Mammary epithelial cell (primary cell): ENCODE measurements at regions of chr4 and their contacts with region 1.

Region 1: DNA sequence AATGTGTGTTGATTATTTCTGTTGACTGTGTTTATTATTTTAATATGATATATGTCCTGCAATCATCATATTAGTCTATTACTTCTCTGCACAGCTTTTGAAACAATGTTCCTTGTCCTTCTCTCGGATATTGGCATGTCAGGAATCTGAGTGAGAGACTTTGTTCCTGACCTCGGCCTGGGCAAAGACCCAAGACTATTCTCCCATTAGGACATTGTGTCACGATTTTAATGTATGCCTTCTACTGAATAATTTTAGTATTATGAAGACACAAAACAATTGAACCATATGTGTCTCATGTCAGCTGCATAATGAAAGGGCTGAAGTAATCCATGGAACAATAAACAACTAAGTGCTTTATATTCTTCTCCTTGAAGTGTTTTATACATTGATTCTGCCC is 580.8 kb upstream of the TENM3 start:
- DNase-seq: peak; percentile 20
- H3K4me3 ChIP-seq: no peak overlapping the region
- H3K27ac ChIP-seq: no peak overlapping the region
- H3K4me1 ChIP-seq: peaks cover 26% of the 10 kb centered on the region
- H3K27me3 ChIP-seq: no peaks in the 10 kb centered on the region
- CTCF ChIP-seq: no peak

Region 2: GRCh38 chr4:180923486-180923885 is 738.9 kb before region 1 on chr4:
- CTCF ChIA-PET with region 1: no interaction called
- dilution Hi-C with region 1: no loop called
- in situ Hi-C with region 1: no loop called
- intact Hi-C with region 1: loop called (anchors 5 kb)
- DNase-seq: peak; percentile 51
- H3K4me3 ChIP-seq: no peak overlapping the region
- H3K27ac ChIP-seq: peak overlapping the region; percentile 40
- H3K4me1 ChIP-seq: peaks cover 31% of the 10 kb centered on the region
- H3K27me3 ChIP-seq: no peaks in the 10 kb centered on the region
- CTCF ChIP-seq: no peak

Region 3: DNA sequence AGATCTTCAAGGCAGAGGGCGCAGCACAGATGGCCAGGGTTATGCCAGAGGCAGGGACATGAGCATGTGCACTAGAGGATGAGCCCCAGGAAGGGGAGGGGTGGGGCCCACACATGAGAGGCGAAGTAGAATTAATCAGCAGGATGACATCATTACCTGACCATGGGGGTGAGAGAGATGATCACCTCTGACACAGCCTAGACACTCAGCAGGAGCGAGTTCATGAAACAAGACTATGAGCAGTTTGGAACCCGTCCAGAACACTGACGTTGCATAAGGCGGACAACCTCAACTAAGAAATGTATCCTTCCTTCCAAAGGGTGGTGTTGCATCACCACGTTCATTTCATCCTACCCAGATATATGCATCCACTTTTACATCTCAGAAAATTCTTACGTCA is 134.1 kb after region 1 on chr4:
- CTCF ChIA-PET with region 1: no interaction called
- dilution Hi-C with region 1: no loop called
- in situ Hi-C with region 1: no loop called
- intact Hi-C with region 1: loop called (anchors 10 kb)
- DNase-seq: peak; percentile 98
- H3K4me3 ChIP-seq: no peak overlapping the region
- H3K27ac ChIP-seq: peak overlapping the region; percentile 61
- H3K4me1 ChIP-seq: peaks cover 17% of the 10 kb centered on the region
- H3K27me3 ChIP-seq: no peaks in the 10 kb centered on the region
- CTCF ChIP-seq: no peak

Region 4: DNA sequence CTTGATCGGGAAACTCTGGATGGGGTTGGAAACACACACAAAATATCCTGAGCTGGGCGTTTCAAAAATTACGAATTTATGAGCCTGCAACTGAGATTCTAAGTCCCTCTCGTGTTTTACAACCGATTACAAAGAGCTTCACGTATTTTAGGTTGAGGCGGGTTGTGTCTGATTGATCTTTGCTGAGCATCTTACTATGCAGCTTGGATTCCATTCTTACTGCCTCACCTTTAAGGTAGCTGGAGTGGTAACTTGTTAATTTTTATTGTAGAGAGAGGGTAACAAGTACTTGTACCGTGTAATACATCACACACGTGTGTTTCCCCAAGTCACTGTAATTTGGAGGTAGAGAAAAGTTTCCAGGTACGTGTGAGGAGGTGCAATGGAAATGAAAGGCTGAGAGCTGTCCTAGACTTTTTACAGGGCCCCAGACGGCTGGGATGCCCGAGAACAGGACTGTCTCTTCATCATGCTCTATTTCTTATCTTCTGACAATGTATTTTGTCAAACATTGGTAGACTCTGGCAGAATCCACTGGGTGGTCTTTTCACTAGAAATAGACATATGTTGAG is 483.0 kb after region 1 on chr4:
- CTCF ChIA-PET with region 1: no interaction called
- dilution Hi-C with region 1: no loop called
- in situ Hi-C with region 1: no loop called
- intact Hi-C with region 1: no loop called
- DNase-seq: peak; percentile 54
- H3K4me3 ChIP-seq: peak overlapping the region; percentile 67 to 98 (median 88)
- H3K27ac ChIP-seq: peak overlapping the region; percentile 88
- H3K4me1 ChIP-seq: peaks cover 25% of the 10 kb centered on the region
- H3K27me3 ChIP-seq: no peaks in the 10 kb centered on the region
- CTCF ChIP-seq: no peak